ENCODE measurements at regions of chr17 and their contacts with region 1.

Region 1: DNA sequence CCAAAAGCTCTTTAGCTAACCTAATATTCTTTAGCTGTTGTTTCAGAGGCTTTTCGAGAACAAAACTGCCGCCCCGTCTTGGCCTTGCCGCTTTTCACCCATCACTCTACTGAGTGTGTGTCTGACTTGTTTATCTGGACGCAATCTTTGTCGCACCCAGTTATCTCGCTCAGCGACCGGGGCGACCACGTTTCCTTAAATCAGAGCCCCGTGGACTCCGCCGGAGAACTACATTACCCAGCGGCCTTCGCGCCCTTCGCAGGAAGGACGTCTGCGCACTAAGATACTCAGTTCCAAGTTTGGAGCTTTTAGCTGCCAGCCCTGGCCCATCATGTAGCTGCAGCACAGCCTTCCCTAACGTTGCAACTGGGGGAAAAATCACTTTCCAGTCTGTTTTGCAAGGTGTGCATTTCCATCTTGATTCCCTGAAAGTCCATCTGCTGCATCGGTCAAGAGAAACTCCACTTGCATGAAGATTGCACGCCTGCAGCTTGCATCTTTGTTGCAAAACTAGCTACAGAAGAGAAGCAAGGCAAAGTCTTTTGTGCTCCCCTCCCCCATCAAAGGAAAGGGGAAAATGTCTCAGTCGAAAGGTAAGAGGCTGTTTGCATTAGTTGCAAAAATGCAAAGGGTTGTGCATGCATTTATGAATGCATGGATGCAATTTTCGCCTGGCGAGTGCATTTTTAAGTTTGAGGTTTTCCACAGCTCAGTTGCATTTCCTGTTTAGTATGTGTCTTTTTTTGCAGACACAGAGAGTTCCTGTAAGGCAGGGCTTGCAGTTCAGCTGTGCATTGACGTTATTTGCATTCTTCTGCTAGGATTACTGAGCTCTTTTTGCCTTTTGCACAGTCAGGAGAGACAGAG is at the start of gene MAP2K6:
- DNase-seq: peak; percentile 53 to 86 (median 81)
- ATAC-seq: peak; percentile 97
- H3K4me3 ChIP-seq: peak within 1 kb of the TSS; percentile 85
- H3K4me3 Mint-ChIP-seq: peak within 1 kb of the TSS in 2 of 10 donors; percentile 10 to 44
- H3K27ac ChIP-seq: peak within 1 kb of the TSS; percentile 52
- H3K27ac Mint-ChIP-seq: peak within 1 kb of the TSS in 2 of 9 donors; percentile 19 to 23
- H3K4me1 ChIP-seq: peaks cover 11 to 32% of the 10 kb centered on the region in 2 donors
- H3K4me1 Mint-ChIP-seq: peaks cover 0 to 18% (median 9%) of the 10 kb centered on the region in 7 donors
- H3K27me3 ChIP-seq: no peaks in the 10 kb centered on the region
- H3K27me3 Mint-ChIP-seq: no peaks in the 10 kb centered on the region
- total RNA-seq, gene MAP2K6: 7.6 to 21.4 (median 18.3) TPM

Region 2: GRCh38 chr17:68512247-68512982 is 902.2 kb before region 1 on chr17 and contains the start of gene PRKAR1A:
- CTCF ChIA-PET with region 1: no interaction called
- POLR2A ChIA-PET with region 1: no interaction called
- intact Hi-C with region 1: loop called in 1 of 2 experiments (anchors 10 kb)
- DNase-seq: peak; percentile 84 to 96 (median 94)
- ATAC-seq: peak; percentile 92
- H3K4me3 ChIP-seq: peak within 1 kb of the TSS; percentile 97
- H3K4me3 Mint-ChIP-seq: peak within 1 kb of the TSS; percentile 89 to 100 (median 100)
- H3K27ac ChIP-seq: peak within 1 kb of the TSS; percentile 98
- H3K27ac Mint-ChIP-seq: peak within 1 kb of the TSS; percentile 91 to 100 (median 100)
- H3K4me1 ChIP-seq: peaks cover 13 to 22% of the 10 kb centered on the region in 2 donors
- H3K4me1 Mint-ChIP-seq: peaks cover 34 to 74% (median 51%) of the 10 kb centered on the region in 7 donors
- H3K27me3 ChIP-seq: no peaks in the 10 kb centered on the region
- H3K27me3 Mint-ChIP-seq: no peaks in the 10 kb centered on the region
- total RNA-seq, gene PRKAR1A: 115 to 224 (median 156) TPM

Region 3: DNA sequence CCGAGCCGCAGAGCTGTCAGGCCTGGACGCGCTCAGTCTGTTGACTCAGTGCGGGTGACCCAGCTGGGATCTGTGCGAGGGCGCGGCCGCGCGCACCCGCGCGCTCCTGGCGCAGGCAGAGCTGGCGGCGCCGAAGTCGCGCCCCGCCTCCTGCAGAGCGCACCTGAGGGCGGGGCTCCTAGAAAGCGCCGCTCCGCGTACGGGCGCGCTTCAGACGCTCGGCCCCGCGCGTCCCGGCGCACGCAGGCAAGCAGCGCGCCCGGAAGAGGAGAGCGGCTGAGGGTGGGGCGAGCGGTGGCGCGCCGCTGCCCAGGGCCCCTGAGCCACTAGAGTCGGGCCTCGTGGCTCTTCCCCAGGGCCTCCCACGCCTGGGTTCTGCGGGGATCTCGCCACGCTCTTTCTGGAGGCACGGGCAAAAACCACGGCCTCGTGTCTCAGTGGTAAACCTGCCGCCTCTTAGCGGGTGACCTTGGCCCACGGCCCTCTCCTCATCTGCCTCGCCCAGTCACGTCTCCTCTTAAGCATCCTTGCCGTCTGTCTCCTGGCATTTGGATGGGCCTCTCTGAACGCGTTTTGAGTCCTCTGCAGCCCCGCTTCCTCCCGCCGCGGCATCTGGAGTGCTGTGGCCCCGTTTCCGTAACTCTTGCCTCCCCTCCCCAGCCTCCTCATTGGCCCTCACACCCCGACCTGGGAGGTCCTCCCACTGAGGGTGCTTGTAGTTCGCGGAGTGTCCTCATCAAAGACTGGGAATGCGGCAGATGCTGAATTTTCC is 87.4 kb before region 1 on chr17 and contains the start of gene ABCA5:
- CTCF ChIA-PET with region 1: no interaction called
- POLR2A ChIA-PET with region 1: interaction called, 23 read pairs
- intact Hi-C with region 1: loop called (anchors 1 kb)
- DNase-seq: peak; percentile 85 to 91 (median 89)
- ATAC-seq: peak; percentile 97
- H3K4me3 ChIP-seq: peak within 1 kb of the TSS; percentile 85
- H3K4me3 Mint-ChIP-seq: peak within 1 kb of the TSS; percentile 90 to 97 (median 95)
- H3K27ac ChIP-seq: peak within 1 kb of the TSS; percentile 76
- H3K27ac Mint-ChIP-seq: peak within 1 kb of the TSS; percentile 96 to 99 (median 98)
- H3K4me1 ChIP-seq: peaks cover 9 to 10% of the 10 kb centered on the region in 2 donors
- H3K4me1 Mint-ChIP-seq: peaks cover 17 to 39% (median 32%) of the 10 kb centered on the region in 7 donors
- H3K27me3 ChIP-seq: no peaks in the 10 kb centered on the region
- H3K27me3 Mint-ChIP-seq: peaks cover 0 to 10% (median 4%) of the 10 kb centered on the region in 5 donors
- total RNA-seq, gene ABCA5: 29.6 to 49.9 (median 41.3) TPM

Region 4: GRCh38 chr17:69430488-69430887 is 15.8 kb after region 1 on chr17:
- CTCF ChIA-PET with region 1: interaction called, 4 read pairs
- POLR2A ChIA-PET with region 1: interaction called, 5 read pairs
- intact Hi-C with region 1: loop called in 1 of 2 experiments (anchors 2 kb)
- DNase-seq: no peak
- ATAC-seq: no peak
- H3K4me3 ChIP-seq: no peak overlapping the region
- H3K4me3 Mint-ChIP-seq: peak overlapping the region in 2 of 10 donors; percentile 25 to 53
- H3K27ac ChIP-seq: no peak overlapping the region
- H3K27ac Mint-ChIP-seq: peak overlapping the region in 3 of 9 donors; percentile 14 to 78 (median 72)
- H3K4me1 ChIP-seq: no peaks in the 10 kb centered on the region
- H3K4me1 Mint-ChIP-seq: peaks cover 24 to 88% (median 77%) of the 10 kb centered on the region in 7 donors
- H3K27me3 ChIP-seq: no peaks in the 10 kb centered on the region
- H3K27me3 Mint-ChIP-seq: no peaks in the 10 kb centered on the region

Region 5: GRCh38 chr17:69457603-69458002 is 43.0 kb after region 1 on chr17:
- CTCF ChIA-PET with region 1: no interaction called
- POLR2A ChIA-PET with region 1: no interaction called
- intact Hi-C with region 1: loop called in 1 of 2 experiments (anchors 5 kb)
- DNase-seq: no peak
- ATAC-seq: no peak
- H3K4me3 ChIP-seq: no peak overlapping the region
- H3K4me3 Mint-ChIP-seq: no peak overlapping the region
- H3K27ac ChIP-seq: no peak overlapping the region
- H3K27ac Mint-ChIP-seq: no peak overlapping the region
- H3K4me1 ChIP-seq: no peaks in the 10 kb centered on the region
- H3K4me1 Mint-ChIP-seq: peaks cover 5 to 68% (median 44%) of the 10 kb centered on the region in 7 donors
- H3K27me3 ChIP-seq: no peaks in the 10 kb centered on the region
- H3K27me3 Mint-ChIP-seq: no peaks in the 10 kb centered on the region

Region 6: GRCh38 chr17:69501591-69502468 is 87.2 kb after region 1 on chr17:
- CTCF ChIA-PET with region 1: no interaction called
- POLR2A ChIA-PET with region 1: no interaction called
- intact Hi-C with region 1: loop called in 1 of 2 experiments (anchors 5 kb)
- DNase-seq: no peak
- ATAC-seq: peak; percentile 52
- H3K4me3 ChIP-seq: no peak overlapping the region
- H3K4me3 Mint-ChIP-seq: peak overlapping the region in 3 of 10 donors; percentile 2 to 8 (median 2)
- H3K27ac ChIP-seq: no peak overlapping the region
- H3K27ac Mint-ChIP-seq: peak overlapping the region in 7 of 9 donors; percentile 3 to 76 (median 13)
- H3K4me1 ChIP-seq: no peaks in the 10 kb centered on the region
- H3K4me1 Mint-ChIP-seq: peaks cover 4 to 69% (median 58%) of the 10 kb centered on the region in 7 donors
- H3K27me3 ChIP-seq: no peaks in the 10 kb centered on the region
- H3K27me3 Mint-ChIP-seq: no peaks in the 10 kb centered on the region

Region 7: GRCh38 chr17:69523244-69523861 is 108.7 kb after region 1 on chr17:
- CTCF ChIA-PET with region 1: no interaction called
- POLR2A ChIA-PET with region 1: interaction called, 3 read pairs
- intact Hi-C with region 1: loop called (anchors 5 kb)
- DNase-seq: peak in 4 of 9 donors; percentile 3 to 22 (median 9)
- ATAC-seq: no peak
- H3K4me3 ChIP-seq: no peak overlapping the region
- H3K4me3 Mint-ChIP-seq: no peak overlapping the region
- H3K27ac ChIP-seq: no peak overlapping the region
- H3K27ac Mint-ChIP-seq: peak overlapping the region in 1 of 9 donors; percentile 20
- H3K4me1 ChIP-seq: no peaks in the 10 kb centered on the region
- H3K4me1 Mint-ChIP-seq: peaks cover 0 to 6% (median 0%) of the 10 kb centered on the region in 7 donors
- H3K27me3 ChIP-seq: no peaks in the 10 kb centered on the region
- H3K27me3 Mint-ChIP-seq: no peaks in the 10 kb centered on the region

Region 8: GRCh38 chr17:69560987-69561441 is 146.4 kb after region 1 on chr17:
- CTCF ChIA-PET with region 1: no interaction called
- POLR2A ChIA-PET with region 1: no interaction called
- intact Hi-C with region 1: no loop called
- DNase-seq: no peak
- ATAC-seq: no peak
- H3K4me3 ChIP-seq: no peak overlapping the region
- H3K4me3 Mint-ChIP-seq: no peak overlapping the region
- H3K27ac ChIP-seq: no peak overlapping the region
- H3K27ac Mint-ChIP-seq: peak overlapping the region in 1 of 9 donors; percentile 0
- H3K4me1 ChIP-seq: no peaks in the 10 kb centered on the region
- H3K4me1 Mint-ChIP-seq: no peaks in the 10 kb centered on the region
- H3K27me3 ChIP-seq: no peaks in the 10 kb centered on the region
- H3K27me3 Mint-ChIP-seq: no peaks in the 10 kb centered on the region